ENCODE measurements at regions of chr12 and their contacts with region 1.

Region 1: DNA sequence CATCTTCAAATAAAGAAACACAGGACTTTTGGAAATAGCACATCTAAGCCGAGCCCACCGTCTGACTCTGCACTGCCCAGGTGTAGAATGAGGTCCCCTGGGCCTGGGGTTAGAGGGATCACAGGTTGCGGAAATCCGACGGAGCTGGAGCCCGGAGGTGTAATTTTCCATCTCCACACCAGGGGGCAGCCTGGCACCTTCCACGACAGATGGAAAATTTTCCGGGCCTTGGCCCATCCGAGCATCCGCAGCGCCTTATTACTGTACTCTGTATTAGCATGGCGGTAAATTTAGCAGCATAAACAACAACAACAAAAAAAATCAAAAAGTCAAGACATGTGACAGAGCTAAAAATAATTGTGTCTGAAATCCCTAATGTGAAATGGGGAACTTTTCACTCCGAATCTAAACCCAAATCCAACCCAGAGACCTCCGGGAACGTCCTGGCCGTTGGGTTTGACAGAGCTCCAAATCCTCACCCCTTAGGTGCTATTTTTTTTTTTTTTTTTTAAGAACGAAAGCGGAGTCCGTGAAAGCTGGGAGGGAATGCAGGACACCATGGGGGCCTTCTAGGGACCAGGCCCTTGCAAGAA is 93.9 kb downstream of the KSR2 start:
- DNase-seq: peak; percentile 81
- H3K4me3 Mint-ChIP-seq: no peak overlapping the region
- H3K27ac Mint-ChIP-seq: no peak overlapping the region
- H3K4me1 Mint-ChIP-seq: peaks cover 8% of the 10 kb centered on the region
- H3K27me3 Mint-ChIP-seq: peaks cover 19% of the 10 kb centered on the region

Region 2: DNA sequence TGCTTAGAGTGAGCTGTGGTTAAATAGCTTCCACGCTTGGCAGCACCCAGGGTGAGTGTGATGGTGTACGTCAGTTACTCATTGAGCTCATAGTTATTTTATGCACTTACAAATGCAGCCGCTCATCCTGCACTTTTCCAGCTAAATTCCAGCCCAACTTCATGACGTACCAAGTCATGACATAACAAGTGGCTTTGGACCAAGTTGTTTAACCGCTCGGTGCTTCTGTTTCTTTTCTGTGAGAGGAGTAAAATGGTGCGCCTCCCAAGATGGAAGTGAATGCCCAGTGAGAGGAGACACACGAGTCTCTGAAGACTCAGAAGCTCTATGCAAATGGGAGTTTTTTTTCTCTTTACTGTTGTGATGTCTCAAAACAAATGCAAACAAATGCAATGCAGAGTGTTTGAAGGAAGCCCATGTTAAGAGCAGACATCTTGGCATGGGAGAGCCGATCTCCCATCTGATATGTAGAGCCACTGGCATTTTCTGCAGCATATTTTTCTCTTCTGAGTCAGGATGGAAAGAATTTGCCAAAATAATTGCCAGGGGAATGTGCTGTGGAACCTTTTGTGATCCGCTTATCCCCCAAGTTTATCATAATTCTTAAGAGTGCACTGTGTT is 892.0 kb before region 1 on chr12:
- CTCF ChIA-PET with region 1: no interaction called
- intact Hi-C with region 1: no loop called
- DNase-seq: no peak
- H3K4me3 Mint-ChIP-seq: no peak overlapping the region
- H3K27ac Mint-ChIP-seq: no peak overlapping the region
- H3K4me1 Mint-ChIP-seq: no peaks in the 10 kb centered on the region
- H3K27me3 Mint-ChIP-seq: no peaks in the 10 kb centered on the region

Region 3: GRCh38 chr12:117714203-117714602 is 160.7 kb before region 1 on chr12:
- CTCF ChIA-PET with region 1: no interaction called
- intact Hi-C with region 1: no loop called
- DNase-seq: no peak
- H3K4me3 Mint-ChIP-seq: no peak overlapping the region
- H3K27ac Mint-ChIP-seq: no peak overlapping the region
- H3K4me1 Mint-ChIP-seq: no peaks in the 10 kb centered on the region
- H3K27me3 Mint-ChIP-seq: peaks cover 2% of the 10 kb centered on the region

Region 4: GRCh38 chr12:117850048-117850447 is 24.9 kb before region 1 on chr12:
- CTCF ChIA-PET with region 1: interaction called, 12 read pairs
- intact Hi-C with region 1: no loop called
- DNase-seq: peak; percentile 6
- H3K4me3 Mint-ChIP-seq: no peak overlapping the region
- H3K27ac Mint-ChIP-seq: no peak overlapping the region
- H3K4me1 Mint-ChIP-seq: no peaks in the 10 kb centered on the region
- H3K27me3 Mint-ChIP-seq: peaks cover 30% of the 10 kb centered on the region

Region 5: GRCh38 chr12:118011377-118011776 is 136.4 kb after region 1 on chr12:
- CTCF ChIA-PET with region 1: interaction called, 11 read pairs
- intact Hi-C with region 1: no loop called
- DNase-seq: no peak
- H3K4me3 Mint-ChIP-seq: no peak overlapping the region
- H3K27ac Mint-ChIP-seq: no peak overlapping the region
- H3K4me1 Mint-ChIP-seq: peaks cover 3% of the 10 kb centered on the region
- H3K27me3 Mint-ChIP-seq: no peaks in the 10 kb centered on the region

Region 6: GRCh38 chr12:118055144-118055557 is 180.2 kb after region 1 on chr12:
- CTCF ChIA-PET with region 1: interaction called, 28 read pairs
- intact Hi-C with region 1: loop called (anchors 1 kb)
- DNase-seq: peak; percentile 85
- H3K4me3 Mint-ChIP-seq: no peak overlapping the region
- H3K27ac Mint-ChIP-seq: no peak overlapping the region
- H3K4me1 Mint-ChIP-seq: peaks cover 42% of the 10 kb centered on the region
- H3K27me3 Mint-ChIP-seq: no peaks in the 10 kb centered on the region

Region 7: DNA sequence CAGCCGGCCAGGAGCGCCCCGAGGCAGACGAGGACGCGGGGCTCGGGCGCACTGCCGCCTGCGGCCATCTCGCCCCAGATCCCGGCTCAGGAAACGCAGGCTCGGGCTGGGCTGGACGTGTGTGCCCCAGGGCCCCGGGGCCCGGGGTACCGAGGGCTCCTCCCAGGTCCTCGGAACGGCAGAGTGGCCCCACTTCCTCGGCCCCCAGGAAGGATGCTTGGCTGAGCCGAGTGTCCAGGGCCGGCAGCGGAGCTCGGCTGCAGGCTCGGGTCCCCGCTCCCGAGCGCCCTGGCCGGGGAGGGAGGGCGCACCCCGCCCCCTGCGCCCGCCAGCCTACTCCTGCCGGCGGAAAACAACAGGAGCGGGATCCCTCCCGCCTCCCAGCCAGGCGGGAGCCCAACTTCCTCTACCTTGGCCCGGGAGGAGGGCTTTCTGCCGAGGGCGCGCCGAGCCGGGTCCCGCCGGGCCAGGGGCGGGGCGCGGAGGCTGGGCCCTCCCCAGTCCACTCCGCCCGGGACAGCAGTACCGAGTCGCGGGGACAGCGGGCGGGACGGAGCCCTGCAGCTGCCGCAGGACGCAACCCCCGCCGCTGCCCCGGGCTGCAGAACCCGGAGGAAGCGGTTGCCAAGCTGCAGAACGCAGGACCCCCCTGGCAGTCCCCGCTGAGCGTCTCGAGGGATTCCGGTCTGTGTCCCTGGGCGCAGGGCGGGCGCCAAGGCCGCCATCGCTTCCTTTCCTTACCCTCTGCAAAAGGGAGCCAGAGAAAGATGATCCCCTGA is 228.9 kb after region 1 on chr12 and contains the start of gene VSIG10:
- CTCF ChIA-PET with region 1: no interaction called
- intact Hi-C with region 1: loop called (anchors 2 kb)
- DNase-seq: peak; percentile 19
- H3K4me3 Mint-ChIP-seq: peak within 1 kb of the TSS; percentile 68
- H3K27ac Mint-ChIP-seq: peak within 1 kb of the TSS; percentile 16
- H3K4me1 Mint-ChIP-seq: peaks cover 5% of the 10 kb centered on the region
- H3K27me3 Mint-ChIP-seq: peaks cover 20% of the 10 kb centered on the region
- total RNA-seq, gene VSIG10: 1.7 to 2.4 TPM

Measured in activated naive CD4-positive, alpha-beta T cell treated with anti-CD3 and anti-CD28 coated beads for 36 hours (primary cell).